HEK293 (cell line): ENCODE measurements at regions of chr9 and their contacts with region 1.

Region 1: DNA sequence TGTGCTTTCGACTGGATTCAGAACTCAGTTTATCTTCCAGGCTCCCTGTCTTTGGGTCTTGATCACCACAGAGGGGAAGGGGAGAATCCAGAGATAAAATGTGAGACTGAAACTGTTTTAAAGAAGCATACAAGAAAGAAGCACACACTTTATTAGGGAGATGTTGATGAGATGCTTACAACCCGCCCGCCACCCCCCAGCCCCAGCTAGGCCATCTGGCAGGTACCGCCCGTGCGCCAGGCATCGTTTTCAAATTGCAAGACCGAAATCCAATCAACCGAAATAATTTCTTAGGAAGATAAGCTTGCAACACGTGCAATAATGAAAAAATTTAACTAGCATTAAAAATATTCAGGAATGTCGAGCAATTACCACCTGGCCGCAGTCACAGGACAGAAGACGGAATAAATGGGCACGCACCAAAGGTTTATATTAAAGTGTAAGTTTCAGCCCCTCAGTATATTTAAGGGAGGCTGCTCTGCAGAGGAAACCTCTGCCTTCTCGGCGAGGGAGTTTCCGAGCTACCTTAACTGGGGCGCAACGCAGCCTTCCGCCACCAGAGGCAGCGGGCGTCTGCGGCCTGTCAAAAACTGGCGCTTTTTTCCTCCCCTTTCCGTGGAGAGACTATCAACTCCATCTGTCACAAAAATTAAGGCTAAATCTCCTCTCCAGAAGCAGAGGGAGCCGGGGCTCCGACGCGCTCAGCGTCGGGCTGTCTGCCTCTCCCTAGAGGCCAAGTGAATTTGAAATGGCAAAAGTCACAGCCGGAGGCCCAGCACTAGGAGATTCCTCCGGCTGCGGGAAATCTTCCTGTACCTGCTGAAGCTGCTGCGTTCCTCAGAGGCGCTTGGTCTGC is 996 bp upstream of the GAS1 start:
- H3K4me3 ChIP-seq: peak overlapping the region; percentile 36
- H3K27ac ChIP-seq: peak overlapping the region; percentile 74
- H3K4me1 ChIP-seq: peaks cover 8% of the 10 kb centered on the region
- CTCF ChIP-seq: peak; percentile 87

Region 2: GRCh38 chr9:86486891-86487837 is 461.1 kb before region 1 on chr9:
- CTCF ChIA-PET with region 1: interaction called, 14 read pairs
- POLR2A ChIA-PET with region 1: interaction called, 3 read pairs
- H3K4me3 ChIP-seq: no peak overlapping the region
- H3K27ac ChIP-seq: no peak overlapping the region
- H3K4me1 ChIP-seq: peaks cover 3% of the 10 kb centered on the region; the same call in 1 of the 2 replicates
- CTCF ChIP-seq: peak; percentile 38; the same call in 1 of the 2 replicates

Region 3: DNA sequence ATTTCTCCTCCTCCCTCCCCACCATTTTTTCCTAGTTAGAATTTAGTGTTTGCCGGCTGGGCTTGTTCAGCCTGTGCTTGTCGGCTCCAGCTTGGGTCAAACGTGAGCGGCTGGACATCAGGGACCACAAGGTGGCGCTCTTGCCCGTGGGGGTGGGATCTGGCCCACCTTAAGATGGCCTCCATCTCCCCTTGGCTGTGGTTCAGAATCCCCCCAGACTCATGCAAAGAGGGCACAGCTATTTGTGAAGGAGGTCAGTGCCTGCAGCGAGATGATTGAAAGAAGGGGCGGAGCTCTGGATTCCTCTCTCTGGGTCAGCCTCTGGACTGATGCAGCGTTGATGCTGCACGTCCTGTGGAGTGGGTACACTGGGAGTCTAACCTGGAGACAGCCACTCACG is 310.8 kb before region 1 on chr9:
- CTCF ChIA-PET with region 1: interaction called, 15 read pairs
- POLR2A ChIA-PET with region 1: no interaction called
- H3K4me3 ChIP-seq: no peak overlapping the region
- H3K27ac ChIP-seq: no peak overlapping the region
- H3K4me1 ChIP-seq: peaks cover 13% of the 10 kb centered on the region
- CTCF ChIP-seq: peak; percentile 55; the same call in 1 of the 2 replicates

Region 4: GRCh38 chr9:86960938-86961337 is 12.6 kb after region 1 on chr9:
- CTCF ChIA-PET with region 1: interaction called, 10 read pairs
- POLR2A ChIA-PET with region 1: interaction called, 19 read pairs
- H3K4me3 ChIP-seq: no peak overlapping the region
- H3K27ac ChIP-seq: no peak overlapping the region
- H3K4me1 ChIP-seq: peaks cover 3% of the 10 kb centered on the region; the same call in 1 of the 2 replicates
- CTCF ChIP-seq: no peak

Region 5: DNA sequence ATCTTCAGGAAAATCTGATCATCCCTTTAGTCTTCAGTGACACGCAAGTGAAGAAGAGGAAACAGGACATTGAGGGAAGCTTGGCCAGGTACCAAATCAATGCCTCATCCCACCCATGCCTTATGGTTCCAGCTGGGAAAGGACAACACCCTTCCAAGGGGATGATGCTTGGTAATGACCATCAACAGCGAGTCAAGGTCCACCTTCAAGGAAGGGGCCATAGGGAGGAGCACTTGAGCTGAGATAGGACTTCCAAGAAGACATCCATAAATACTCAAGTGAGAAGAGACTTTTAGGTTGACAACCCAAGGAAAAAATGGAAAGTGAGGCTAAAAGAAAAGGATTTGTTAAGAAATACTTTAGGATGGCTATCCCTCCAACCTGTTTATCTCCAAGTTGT is 26.1 kb after region 1 on chr9:
- CTCF ChIA-PET with region 1: interaction called, 10 read pairs
- POLR2A ChIA-PET with region 1: interaction called, 3 read pairs
- H3K4me3 ChIP-seq: no peak overlapping the region
- H3K27ac ChIP-seq: no peak overlapping the region
- H3K4me1 ChIP-seq: no peaks in the 10 kb centered on the region
- CTCF ChIP-seq: no peak

Region 6: GRCh38 chr9:87324613-87325194 is 376.4 kb after region 1 on chr9:
- CTCF ChIA-PET with region 1: interaction called, 21 read pairs
- POLR2A ChIA-PET with region 1: interaction called, 4 read pairs
- H3K4me3 ChIP-seq: no peak overlapping the region
- H3K27ac ChIP-seq: no peak overlapping the region
- H3K4me1 ChIP-seq: no peaks in the 10 kb centered on the region
- CTCF ChIP-seq: peak; percentile 70